B cell (primary cell): ENCODE measurements at regions of chr1 and their contacts with region 1.

Region 1: GRCh38 chr1:116504308-116505156 is 66.3 kb downstream of the CD58 start:
- DNase-seq: peak; percentile 89
- ATAC-seq: peak; percentile 98
- H3K4me3 ChIP-seq: no peak overlapping the region
- H3K4me3 Mint-ChIP-seq: peak overlapping the region; percentile 50
- H3K27ac ChIP-seq: peak overlapping the region; percentile 66 to 77
- H3K27ac Mint-ChIP-seq: peak overlapping the region; percentile 83
- H3K4me1 ChIP-seq: peaks cover 24 to 31% of the 10 kb centered on the region in 2 donors
- H3K4me1 Mint-ChIP-seq: peaks cover 45% of the 10 kb centered on the region
- H3K27me3 ChIP-seq: no peaks in the 10 kb centered on the region
- H3K27me3 Mint-ChIP-seq: no peaks in the 10 kb centered on the region
- CTCF ChIP-seq: no peak

Region 2: GRCh38 chr1:116377541-116378529 is 126.7 kb before region 1 on chr1:
- CTCF ChIA-PET with region 1: interaction called, 4 read pairs
- POLR2A ChIA-PET with region 1: no interaction called
- intact Hi-C with region 1: loop called (anchors 5 kb)
- DNase-seq: peak; percentile 73
- ATAC-seq: peak; percentile 40
- H3K4me3 ChIP-seq: peak overlapping the region in 4 of 5 experiments; percentile 0 to 43 (median 29)
- H3K4me3 Mint-ChIP-seq: peak overlapping the region; percentile 83
- H3K27ac ChIP-seq: peak overlapping the region; percentile 67 to 75
- H3K27ac Mint-ChIP-seq: peak overlapping the region; percentile 94
- H3K4me1 ChIP-seq: peaks cover 48 to 58% of the 10 kb centered on the region in 2 donors
- H3K4me1 Mint-ChIP-seq: peaks cover 78% of the 10 kb centered on the region
- H3K27me3 ChIP-seq: no peaks in the 10 kb centered on the region
- H3K27me3 Mint-ChIP-seq: no peaks in the 10 kb centered on the region
- CTCF ChIP-seq: no peak

Region 3: DNA sequence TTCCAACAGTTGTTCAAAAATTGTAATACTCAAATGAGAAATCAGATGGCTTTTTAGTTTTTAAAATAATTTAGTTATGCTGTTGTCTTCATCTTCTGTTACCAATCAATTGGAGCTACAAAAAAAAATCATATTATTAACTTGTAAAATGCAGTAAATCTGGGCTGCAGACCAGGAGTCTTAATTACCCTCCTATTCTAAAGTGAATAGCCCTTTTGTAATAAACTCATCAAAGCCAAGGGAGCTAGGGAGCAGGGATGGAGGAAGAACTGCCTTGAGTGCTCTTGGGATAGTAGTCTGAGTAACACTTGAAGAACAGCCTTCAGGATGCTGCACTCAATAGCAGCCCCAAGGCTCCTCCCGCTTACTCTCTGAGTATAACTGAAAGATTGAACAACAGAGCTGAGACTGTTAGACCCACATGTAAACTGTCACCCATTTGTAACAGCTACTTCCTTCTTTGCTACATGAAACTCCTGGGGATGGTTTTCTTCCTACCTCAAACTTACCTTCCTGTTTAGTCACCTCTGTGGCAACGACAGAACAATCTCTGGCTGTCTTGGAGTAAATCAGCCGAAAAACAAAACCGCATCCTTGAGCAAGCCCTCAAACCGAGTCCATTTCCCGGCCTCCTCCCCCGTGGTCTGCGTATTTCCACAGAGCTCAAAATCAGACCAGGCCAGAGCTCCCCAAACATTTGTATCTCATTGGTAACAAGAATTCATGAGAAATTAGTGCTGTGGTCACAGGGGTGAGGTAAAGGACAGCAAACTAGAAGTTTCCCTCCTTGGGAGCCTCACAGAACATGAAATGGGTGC is 10.4 kb after region 1 on chr1:
- CTCF ChIA-PET with region 1: interaction called, 25 read pairs
- POLR2A ChIA-PET with region 1: no interaction called
- intact Hi-C with region 1: loop called (anchors 1 kb)
- DNase-seq: peak; percentile 67
- ATAC-seq: peak; percentile 71
- H3K4me3 ChIP-seq: peak overlapping the region in 3 of 5 experiments; percentile 1 to 47 (median 9)
- H3K4me3 Mint-ChIP-seq: peak overlapping the region; percentile 83
- H3K27ac ChIP-seq: peak overlapping the region; percentile 72 to 86
- H3K27ac Mint-ChIP-seq: peak overlapping the region; percentile 96
- H3K4me1 ChIP-seq: peaks cover 20 to 26% of the 10 kb centered on the region in 2 donors
- H3K4me1 Mint-ChIP-seq: peaks cover 47% of the 10 kb centered on the region
- H3K27me3 ChIP-seq: no peaks in the 10 kb centered on the region
- H3K27me3 Mint-ChIP-seq: no peaks in the 10 kb centered on the region
- CTCF ChIP-seq: no peak

Region 4: DNA sequence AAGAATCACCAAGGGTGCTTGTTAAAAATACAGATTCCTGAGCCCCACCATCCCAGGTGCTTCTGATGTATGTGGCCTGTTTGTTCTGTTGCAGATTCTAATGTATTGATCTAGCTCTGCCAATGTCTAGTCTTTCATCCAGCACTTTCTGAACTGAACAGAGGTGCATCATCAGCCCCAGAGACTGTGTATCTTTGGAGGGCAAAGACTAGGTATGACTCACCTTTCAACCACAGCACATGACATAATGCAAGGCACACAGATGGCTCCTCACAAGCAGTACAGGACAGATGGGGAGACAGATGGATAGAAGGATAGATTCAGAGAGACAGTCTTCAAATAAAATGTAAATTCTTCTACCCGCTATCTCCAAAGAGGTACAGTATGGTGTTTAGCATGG is 34.0 kb after region 1 on chr1:
- CTCF ChIA-PET with region 1: interaction called, 9 read pairs
- POLR2A ChIA-PET with region 1: no interaction called
- intact Hi-C with region 1: loop called (anchors 2 kb)
- DNase-seq: no peak
- ATAC-seq: peak; percentile 68
- H3K4me3 ChIP-seq: no peak overlapping the region
- H3K4me3 Mint-ChIP-seq: no peak overlapping the region
- H3K27ac ChIP-seq: no peak overlapping the region
- H3K27ac Mint-ChIP-seq: peak overlapping the region; percentile 16
- H3K4me1 ChIP-seq: peaks cover 11 to 19% of the 10 kb centered on the region in 2 donors
- H3K4me1 Mint-ChIP-seq: peaks cover 49% of the 10 kb centered on the region
- H3K27me3 ChIP-seq: no peaks in the 10 kb centered on the region
- H3K27me3 Mint-ChIP-seq: no peaks in the 10 kb centered on the region
- CTCF ChIP-seq: no peak